ENCODE measurements at regions of chr1 and their contacts with region 1.

Region 1: DNA sequence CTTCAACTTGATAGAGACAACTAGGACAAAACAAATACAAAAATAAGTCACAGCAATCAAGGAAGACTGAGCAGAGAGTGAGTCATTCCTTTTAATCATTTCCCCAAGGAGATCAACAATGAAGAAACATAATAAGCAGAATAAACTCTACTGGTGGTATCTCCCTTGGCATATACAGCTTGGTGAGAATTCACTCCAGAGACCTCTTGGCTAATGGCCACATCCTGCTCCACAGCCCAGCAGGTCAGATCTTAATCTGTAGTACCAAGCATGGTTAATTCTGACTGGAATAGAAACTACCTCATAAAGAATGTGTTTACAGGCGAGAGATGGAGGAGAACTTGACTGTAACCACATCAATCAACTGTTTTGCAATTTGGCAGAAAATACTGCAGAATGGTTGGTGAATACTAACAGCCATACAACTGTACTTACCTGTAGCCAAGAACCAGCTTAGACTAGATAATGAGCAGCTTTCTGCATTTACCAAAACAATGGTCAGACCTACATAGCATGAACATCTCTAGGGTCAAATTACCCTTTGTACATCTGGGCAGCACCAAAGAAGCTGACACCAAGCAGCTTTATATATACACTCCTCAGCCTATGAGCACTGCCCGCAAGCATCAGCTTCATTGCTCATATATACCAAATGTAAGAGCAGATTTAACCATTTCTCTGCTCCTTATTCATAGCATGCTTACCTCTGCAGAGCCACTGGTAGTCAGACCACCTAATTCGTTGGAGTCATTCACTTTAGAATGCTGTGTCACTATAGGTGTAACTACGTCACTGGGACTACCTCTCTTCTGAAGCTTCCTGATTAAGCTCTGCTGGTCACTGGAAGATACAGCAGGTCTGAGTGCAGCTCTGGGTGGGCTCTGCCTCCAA is 51.0 kb downstream of the KIAA0319L start:
- DNase-seq: peak; percentile 78
- ATAC-seq: peak; percentile 92
- H3K4me3 Mint-ChIP-seq: peak overlapping the region; percentile 59
- H3K27ac Mint-ChIP-seq: peak overlapping the region; percentile 84
- H3K4me1 Mint-ChIP-seq: peaks cover 56% of the 10 kb centered on the region
- H3K27me3 Mint-ChIP-seq: no peaks in the 10 kb centered on the region

Region 2: GRCh38 chr1:35539073-35539823 is 33.1 kb after region 1 on chr1:
- CTCF ChIA-PET with region 1: interaction called, 18 read pairs
- POLR2A ChIA-PET with region 1: interaction called, 15 read pairs
- DNase-seq: peak; percentile 71
- ATAC-seq: peak; percentile 95
- H3K4me3 Mint-ChIP-seq: peak overlapping the region; percentile 64
- H3K27ac Mint-ChIP-seq: peak overlapping the region; percentile 94
- H3K4me1 Mint-ChIP-seq: peaks cover 49% of the 10 kb centered on the region
- H3K27me3 Mint-ChIP-seq: no peaks in the 10 kb centered on the region